ENCODE measurements at regions of chr13 and their contacts with region 1.

Region 1: GRCh38 chr13:27171827-27172494 is 350 bp upstream of the USP12 start:
- DNase-seq: peak; percentile 86 to 91
- ATAC-seq: peak; percentile 79 to 80
- H3K4me3 ChIP-seq: peak overlapping the region; percentile 70 to 85 (median 84)
- H3K27ac ChIP-seq: peak overlapping the region; percentile 88 to 94 (median 89)
- H3K4me1 ChIP-seq: peaks cover 36 to 39% of the 10 kb centered on the region in 2 donors
- H3K27me3 ChIP-seq: no peaks in the 10 kb centered on the region
- CTCF ChIP-seq: peak in 2 of 5 experiments; percentile 36 to 47
- POLR2A ChIP-seq: no peak

Region 2: DNA sequence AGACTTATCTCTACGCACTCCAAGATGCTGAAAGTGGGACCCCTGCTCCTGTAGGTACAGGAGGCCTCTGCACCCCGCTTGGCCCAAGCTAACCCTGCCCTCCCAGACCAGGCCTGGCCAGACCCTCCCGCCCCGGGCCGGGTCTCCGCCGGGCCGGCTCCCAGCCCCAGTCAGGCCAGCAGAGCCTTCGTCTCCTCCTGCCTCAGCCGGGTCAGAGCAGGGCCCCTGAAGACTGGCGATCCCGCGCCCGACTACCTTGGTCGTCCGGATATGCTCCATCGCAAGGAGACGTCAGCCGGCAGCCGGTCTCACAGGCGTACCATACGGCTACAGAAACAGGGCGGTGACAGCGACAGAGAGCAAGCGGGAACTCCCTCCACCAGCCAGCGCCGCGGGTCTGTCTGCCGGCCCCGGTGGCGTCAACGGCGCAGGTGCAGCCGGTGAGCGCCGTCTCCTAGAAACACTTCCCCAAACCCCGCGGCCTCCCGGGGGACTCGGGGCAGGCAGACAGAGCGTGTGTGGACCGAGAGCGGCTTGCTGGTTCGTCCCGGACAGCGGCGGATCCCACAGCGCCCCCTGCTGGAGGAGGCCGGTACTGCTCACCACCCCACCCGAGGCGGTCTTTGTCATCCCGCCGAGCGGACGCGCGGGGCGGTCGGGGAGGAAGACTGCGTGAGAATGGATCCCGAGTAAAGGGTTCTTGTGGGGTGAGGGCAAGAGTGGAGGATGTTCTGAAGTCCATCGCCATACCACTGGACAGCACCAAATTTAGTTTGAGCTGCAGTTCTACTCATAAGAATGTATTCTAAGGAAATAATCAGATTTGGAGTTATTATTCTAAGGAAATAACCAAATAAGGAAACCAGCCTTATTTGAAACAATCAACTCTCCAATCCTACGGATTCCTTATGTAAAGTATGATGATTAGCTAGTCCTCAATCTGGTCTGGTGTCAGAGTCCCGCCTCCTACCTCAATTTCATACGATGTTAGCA is 1884.7 kb before region 1 on chr13 and contains the start of gene MTMR6:
- in situ Hi-C with region 1: no loop called
- intact Hi-C with region 1: loop called (anchors 5 kb)
- DNase-seq: peak; percentile 80 to 87
- ATAC-seq: peak; percentile 93 to 96
- H3K4me3 ChIP-seq: peak within 1 kb of the TSS; percentile 81 to 98 (median 94)
- H3K27ac ChIP-seq: peak within 1 kb of the TSS; percentile 83 to 91 (median 90)
- H3K4me1 ChIP-seq: peaks cover 11 to 17% of the 10 kb centered on the region in 2 donors
- H3K27me3 ChIP-seq: peaks cover 0 to 4% (median 0%) of the 10 kb centered on the region in 3 donors
- CTCF ChIP-seq: peak; percentile 99 to 100 (median 99)
- POLR2A ChIP-seq: peak; percentile 47 to 53
- total RNA-seq, gene MTMR6: 17.5 to 25.1 (median 21.7) TPM

Region 3: DNA sequence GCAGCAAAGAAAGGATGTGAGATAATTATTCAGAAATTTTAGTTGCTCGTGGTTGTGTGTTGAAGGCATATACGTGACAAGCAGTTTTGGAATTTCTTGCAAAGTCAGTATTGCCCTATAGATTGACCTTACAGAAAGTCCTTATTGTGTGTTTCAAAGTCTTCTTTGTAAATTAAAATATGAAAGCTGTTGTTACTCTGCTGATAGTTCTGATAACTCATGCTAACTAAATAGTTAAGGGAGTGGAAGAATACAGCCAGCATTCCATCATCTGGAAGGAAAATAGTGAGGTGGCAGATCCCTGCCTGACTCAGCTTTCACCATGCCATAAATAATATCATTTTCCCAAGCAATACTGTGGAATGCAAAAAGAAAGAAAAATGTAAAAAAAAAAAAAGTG is 587.2 kb before region 1 on chr13:
- in situ Hi-C with region 1: no loop called
- intact Hi-C with region 1: no loop called
- DNase-seq: no peak
- ATAC-seq: peak in 1 of 2 donors; percentile 33
- H3K4me3 ChIP-seq: no peak overlapping the region
- H3K27ac ChIP-seq: no peak overlapping the region
- H3K4me1 ChIP-seq: no peaks in the 10 kb centered on the region
- H3K27me3 ChIP-seq: no peaks in the 10 kb centered on the region
- CTCF ChIP-seq: no peak
- POLR2A ChIP-seq: no peak

Region 4: GRCh38 chr13:27130979-27131623 is 40.9 kb before region 1 on chr13:
- in situ Hi-C with region 1: no loop called
- intact Hi-C with region 1: loop called (anchors 1 kb)
- DNase-seq: peak in 1 of 2 donors; percentile 56
- ATAC-seq: peak; percentile 69 to 79
- H3K4me3 ChIP-seq: peak overlapping the region in 1 of 4 donors; percentile 32
- H3K27ac ChIP-seq: peak overlapping the region; percentile 55 to 74 (median 66)
- H3K4me1 ChIP-seq: peaks cover 39 to 79% of the 10 kb centered on the region in 2 donors
- H3K27me3 ChIP-seq: no peaks in the 10 kb centered on the region
- CTCF ChIP-seq: no peak
- POLR2A ChIP-seq: no peak

Region 5: DNA sequence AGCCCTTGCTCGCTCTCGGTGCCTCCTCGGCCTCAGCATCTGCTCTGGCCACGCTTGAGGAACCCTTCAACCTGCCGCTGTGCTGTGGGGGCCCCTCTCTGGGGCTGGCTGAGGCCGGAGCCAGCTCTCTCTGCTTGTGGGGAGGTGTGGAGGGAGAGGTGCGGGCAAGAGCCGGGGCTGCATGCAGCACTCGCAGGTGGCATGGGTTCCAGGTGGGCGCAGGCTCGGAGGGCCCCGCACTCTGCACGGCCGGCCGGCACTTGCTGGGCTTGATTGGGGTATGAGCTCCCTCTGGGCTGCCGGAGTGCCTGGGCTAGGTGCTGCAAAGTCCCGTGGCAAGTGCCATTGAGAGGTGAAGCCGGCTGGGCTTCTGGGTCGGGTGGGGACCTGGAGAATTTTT is 47.6 kb after region 1 on chr13:
- in situ Hi-C with region 1: no loop called
- intact Hi-C with region 1: no loop called
- DNase-seq: no peak
- ATAC-seq: no peak
- H3K4me3 ChIP-seq: no peak overlapping the region
- H3K27ac ChIP-seq: no peak overlapping the region
- H3K4me1 ChIP-seq: no peaks in the 10 kb centered on the region
- H3K27me3 ChIP-seq: no peaks in the 10 kb centered on the region
- CTCF ChIP-seq: no peak
- POLR2A ChIP-seq: no peak

Region 6: GRCh38 chr13:27251166-27252091 is 79.5 kb after region 1 on chr13 and contains the start of gene RPL21:
- in situ Hi-C with region 1: loop called in 1 of 4 experiments (anchors 5 kb)
- intact Hi-C with region 1: loop called (anchors 1 kb)
- DNase-seq: peak; percentile 95 to 96
- ATAC-seq: peak; percentile 99
- H3K4me3 ChIP-seq: peak within 1 kb of the TSS; percentile 83 to 99 (median 88)
- H3K27ac ChIP-seq: peak within 1 kb of the TSS; percentile 90 to 99 (median 93)
- H3K4me1 ChIP-seq: peaks cover 28 to 38% of the 10 kb centered on the region in 2 donors
- H3K27me3 ChIP-seq: no peaks in the 10 kb centered on the region
- CTCF ChIP-seq: peak in 2 of 5 experiments; percentile 12 to 20
- POLR2A ChIP-seq: peak; percentile 89 to 92
- total RNA-seq, gene RPL21: 774 to 913 (median 796) TPM

Region 7: DNA sequence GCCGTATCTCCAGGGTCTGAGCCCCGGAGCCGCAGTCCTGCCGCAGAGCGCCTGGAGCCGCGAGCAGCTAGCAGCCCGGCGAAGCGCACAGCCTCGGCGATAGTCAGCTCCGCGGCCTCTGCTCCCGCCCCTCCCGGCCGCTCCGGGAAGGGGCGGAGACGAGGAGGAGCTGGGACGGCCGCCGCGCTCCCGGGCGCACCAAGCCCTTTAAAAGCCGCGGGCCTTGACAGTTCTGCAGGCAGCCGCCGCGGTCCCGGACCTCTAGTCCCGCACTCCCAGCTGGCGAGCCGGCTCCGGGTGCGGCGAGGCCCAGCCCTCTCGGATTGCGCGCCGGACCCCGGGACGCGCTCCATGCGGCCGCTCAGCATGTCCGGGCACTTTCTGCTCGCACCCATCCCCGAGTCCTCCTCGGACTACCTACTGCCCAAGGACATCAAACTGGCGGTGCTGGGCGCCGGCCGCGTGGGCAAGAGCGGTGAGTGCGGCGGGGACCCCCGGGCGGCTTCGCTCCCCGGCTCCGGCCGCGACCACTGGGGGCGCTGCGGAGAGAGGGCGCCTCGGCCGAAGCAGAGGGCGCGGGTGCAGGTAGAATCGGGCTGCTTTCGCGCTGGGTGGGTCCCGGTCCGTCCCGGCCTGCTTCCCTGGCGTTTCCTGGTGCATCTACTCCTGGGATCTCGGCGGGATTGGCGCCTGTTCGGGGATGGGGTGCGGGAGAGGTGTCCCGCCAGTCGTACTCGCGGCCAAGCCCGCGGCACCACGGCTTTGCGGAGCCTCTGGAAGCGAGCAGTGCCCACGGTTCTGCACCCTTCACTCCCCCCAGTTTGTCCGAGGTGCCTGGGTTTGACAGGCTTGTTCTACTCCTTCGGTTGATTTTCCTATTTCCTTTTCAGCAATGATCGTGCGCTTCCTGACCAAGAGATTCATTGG is 98.9 kb after region 1 on chr13 and contains the start of gene RASL11A:
- in situ Hi-C with region 1: no loop called
- intact Hi-C with region 1: loop called (anchors 2 kb)
- DNase-seq: peak; percentile 57 to 71
- ATAC-seq: peak; percentile 86 to 90
- H3K4me3 ChIP-seq: peak within 1 kb of the TSS; percentile 65 to 91 (median 74)
- H3K27ac ChIP-seq: peak within 1 kb of the TSS; percentile 75 to 86 (median 84)
- H3K4me1 ChIP-seq: peaks cover 4 to 6% of the 10 kb centered on the region in 2 donors
- H3K27me3 ChIP-seq: no peaks in the 10 kb centered on the region
- CTCF ChIP-seq: peak; percentile 84 to 96 (median 87)
- POLR2A ChIP-seq: peak; percentile 61 to 87
- total RNA-seq, gene RASL11A: 2.8 to 9.0 (median 5.7) TPM

Region 8: DNA sequence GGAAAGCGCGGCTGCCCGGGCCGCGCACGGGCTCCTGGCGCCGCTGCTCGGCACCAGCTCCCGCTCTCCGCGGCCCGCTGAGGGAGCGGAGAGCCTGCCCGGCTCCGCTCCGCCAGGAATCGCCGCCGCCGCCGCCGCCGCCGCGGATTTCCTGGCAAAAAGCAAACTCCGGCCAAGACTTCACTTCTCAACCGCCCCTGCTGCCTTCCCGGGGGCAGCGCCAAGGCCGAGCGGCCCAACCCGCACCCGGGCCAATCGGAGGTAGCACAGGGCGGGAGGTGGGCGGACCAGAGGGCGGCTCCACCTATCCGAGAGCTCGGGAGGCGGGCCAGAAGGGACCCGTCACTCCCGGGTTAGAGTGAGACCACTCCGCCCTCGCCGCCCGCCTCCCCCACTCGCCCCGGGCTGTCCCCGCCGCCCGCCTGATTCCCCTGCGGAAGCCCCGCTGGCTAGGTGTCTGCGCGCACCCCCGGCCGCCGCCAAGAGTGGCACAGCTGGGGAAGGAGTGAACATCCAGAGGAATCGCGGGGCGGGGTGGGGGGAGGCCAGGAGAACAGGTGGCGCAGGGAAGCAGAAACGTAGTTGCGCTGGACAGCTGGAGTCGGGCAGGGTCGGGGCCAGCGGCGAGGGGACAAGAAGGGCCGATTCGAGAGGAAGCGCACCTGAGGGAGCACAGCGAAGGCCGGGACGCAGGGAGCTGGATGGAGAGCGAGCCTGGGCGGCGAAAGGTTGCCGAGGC is 448.6 kb after region 1 on chr13 and contains the start of gene LNX2:
- in situ Hi-C with region 1: loop called in 1 of 4 experiments (anchors 25 kb)
- intact Hi-C with region 1: loop called (anchors 10 kb)
- DNase-seq: peak; percentile 98 to 99
- ATAC-seq: peak; percentile 72 to 73
- H3K4me3 ChIP-seq: peak within 1 kb of the TSS; percentile 69 to 98 (median 90)
- H3K27ac ChIP-seq: peak within 1 kb of the TSS; percentile 95 to 100 (median 99)
- H3K4me1 ChIP-seq: peaks cover 30 to 44% of the 10 kb centered on the region in 2 donors
- H3K27me3 ChIP-seq: no peaks in the 10 kb centered on the region
- CTCF ChIP-seq: peak in 2 of 5 experiments; percentile 24 to 29
- POLR2A ChIP-seq: peak; percentile 92 to 94
- total RNA-seq, gene LNX2: 5.0 to 7.1 (median 6.2) TPM

Measured in gastrocnemius medialis (tissue), 4 donors.